PC-9 (cell line): ENCODE measurements at regions of chr1 and their contacts with region 1.

Region 1: GRCh38 chr1:151680812-151681211 is 35.8 kb downstream of the CELF3 start:
- DNase-seq: peak; percentile 36 to 92
- H3K4me3 ChIP-seq: peak overlapping the region; percentile 14; the same call in 1 of the 2 replicates
- H3K27ac ChIP-seq: peak overlapping the region; percentile 83
- H3K4me1 ChIP-seq: peaks cover 32% of the 10 kb centered on the region
- H3K27me3 ChIP-seq: no peaks in the 10 kb centered on the region
- CTCF ChIP-seq: no peak

Region 2: DNA sequence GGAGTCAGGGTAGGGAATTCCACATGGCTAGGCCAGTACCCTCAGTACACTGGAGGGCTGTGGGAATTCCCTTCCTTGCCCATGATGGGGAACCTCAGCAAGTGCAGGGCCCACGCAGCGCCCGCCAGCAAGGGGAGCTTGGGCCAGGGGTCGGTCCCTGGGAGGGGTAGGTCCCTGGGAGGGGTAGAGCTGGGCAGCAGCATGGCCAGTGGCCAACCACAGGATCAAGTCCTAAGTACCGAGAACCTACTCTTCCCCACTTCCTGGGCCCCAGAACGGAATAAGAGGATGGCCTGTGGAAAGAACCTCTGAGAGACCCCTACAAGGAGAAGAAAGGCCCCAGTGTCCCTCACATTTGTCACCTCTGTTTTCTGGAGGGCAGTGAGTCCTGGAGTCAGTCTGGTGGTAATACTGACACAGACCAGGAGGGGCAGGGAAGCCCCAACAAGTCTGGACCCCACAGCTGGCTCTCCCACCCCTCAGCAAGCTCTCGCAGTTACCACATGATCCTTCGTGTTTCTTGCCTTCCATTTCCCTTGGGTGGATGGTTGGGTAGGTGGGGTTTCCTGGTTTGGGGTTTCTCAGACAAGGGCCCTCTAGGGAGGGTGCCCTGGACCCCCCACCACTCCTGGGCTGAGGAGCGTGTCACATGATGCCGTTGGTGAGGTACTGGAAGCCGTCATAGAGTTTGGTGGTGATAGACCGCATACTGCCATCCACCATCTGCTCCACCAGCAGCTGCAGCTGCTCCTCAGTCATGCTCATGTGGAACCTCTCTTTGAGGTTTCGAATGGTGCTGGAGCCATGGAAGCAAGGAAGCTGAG is 388.4 kb before region 1 on chr1:
- CTCF ChIA-PET with region 1: no interaction called
- POLR2A ChIA-PET with region 1: interaction called, 31 read pairs
- intact Hi-C with region 1: no loop called
- DNase-seq: peak in 1 of 2 experiments; percentile 24
- H3K4me3 ChIP-seq: no peak overlapping the region
- H3K27ac ChIP-seq: no peak overlapping the region
- H3K4me1 ChIP-seq: no peaks in the 10 kb centered on the region
- H3K27me3 ChIP-seq: no peaks in the 10 kb centered on the region
- CTCF ChIP-seq: no peak

Region 3: DNA sequence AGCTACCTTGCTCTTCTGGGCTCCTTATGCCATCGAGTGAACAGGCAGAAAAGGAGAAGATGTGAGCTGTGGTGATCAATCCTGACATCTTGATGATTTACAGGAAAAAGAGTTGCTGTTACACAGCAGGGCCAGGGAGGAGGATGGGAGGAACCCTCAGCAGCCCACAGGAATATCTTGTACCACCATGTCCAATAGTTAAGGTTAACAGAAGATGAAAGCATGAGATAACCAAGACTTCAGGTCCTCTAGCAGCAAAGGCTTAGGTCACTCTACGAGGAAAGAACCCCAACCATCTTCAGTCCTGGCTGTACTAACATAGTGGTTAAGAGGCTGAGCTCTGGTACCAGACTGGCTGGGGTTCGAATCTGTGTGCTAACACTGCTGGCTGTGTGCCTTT is 296.2 kb before region 1 on chr1:
- CTCF ChIA-PET with region 1: no interaction called
- POLR2A ChIA-PET with region 1: no interaction called
- intact Hi-C with region 1: no loop called
- DNase-seq: no peak
- H3K4me3 ChIP-seq: no peak overlapping the region
- H3K27ac ChIP-seq: no peak overlapping the region
- H3K4me1 ChIP-seq: no peaks in the 10 kb centered on the region
- H3K27me3 ChIP-seq: no peaks in the 10 kb centered on the region
- CTCF ChIP-seq: no peak

Region 4: GRCh38 chr1:151539990-151540981 is 140.5 kb before region 1 on chr1 and contains the start of gene TUFT1:
- CTCF ChIA-PET with region 1: no interaction called
- POLR2A ChIA-PET with region 1: no interaction called
- intact Hi-C with region 1: loop called (anchors 5 kb)
- DNase-seq: peak; percentile 85 to 95
- H3K4me3 ChIP-seq: peak within 1 kb of the TSS; percentile 92
- H3K27ac ChIP-seq: peak within 1 kb of the TSS; percentile 95
- H3K4me1 ChIP-seq: peaks cover 60% of the 10 kb centered on the region
- H3K27me3 ChIP-seq: no peaks in the 10 kb centered on the region
- CTCF ChIP-seq: no peak
- total RNA-seq, gene TUFT1: 35.3 and 40.2 TPM in 2 replicates

Region 5: GRCh38 chr1:151606395-151606794 is 74.4 kb before region 1 on chr1:
- CTCF ChIA-PET with region 1: no interaction called
- POLR2A ChIA-PET with region 1: no interaction called
- intact Hi-C with region 1: loop called (anchors 5 kb)
- DNase-seq: peak; percentile 63 to 99
- H3K4me3 ChIP-seq: no peak overlapping the region
- H3K27ac ChIP-seq: peak overlapping the region; percentile 82
- H3K4me1 ChIP-seq: peaks cover 49% of the 10 kb centered on the region
- H3K27me3 ChIP-seq: no peaks in the 10 kb centered on the region
- CTCF ChIP-seq: no peak

Region 6: GRCh38 chr1:151611832-151612500 is 68.8 kb before region 1 on chr1 and contains the start of gene SNX27:
- CTCF ChIA-PET with region 1: no interaction called
- POLR2A ChIA-PET with region 1: interaction called, 14 read pairs
- intact Hi-C with region 1: loop called (anchors 5 kb)
- DNase-seq: peak; percentile 78 to 83
- H3K4me3 ChIP-seq: peak within 1 kb of the TSS; percentile 71
- H3K27ac ChIP-seq: peak within 1 kb of the TSS; percentile 88
- H3K4me1 ChIP-seq: peaks cover 74% of the 10 kb centered on the region
- H3K27me3 ChIP-seq: no peaks in the 10 kb centered on the region
- CTCF ChIP-seq: no peak
- total RNA-seq, gene SNX27: 24.6 and 40.1 TPM in 2 replicates

Region 7: DNA sequence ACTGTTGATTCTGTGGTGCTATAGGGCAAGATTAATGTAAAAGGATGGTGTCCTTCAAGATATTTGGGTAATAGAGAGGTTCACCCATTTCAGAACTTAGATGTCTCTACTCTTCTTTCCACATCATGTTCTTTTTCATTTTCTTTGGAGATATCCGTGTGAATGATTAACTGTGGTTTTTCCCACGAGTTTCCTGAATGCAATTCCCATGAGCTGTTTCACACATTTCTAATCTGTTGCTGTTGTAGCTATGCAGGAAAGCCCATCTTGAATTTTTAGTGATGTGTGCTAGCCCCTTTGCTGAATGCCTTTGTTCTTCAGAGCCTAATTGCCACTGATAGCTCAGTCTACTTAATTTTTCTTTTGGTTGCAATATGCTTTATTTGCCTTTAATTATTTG is 41.3 kb before region 1 on chr1:
- CTCF ChIA-PET with region 1: no interaction called
- POLR2A ChIA-PET with region 1: interaction called, 25 read pairs
- intact Hi-C with region 1: no loop called
- DNase-seq: no peak
- H3K4me3 ChIP-seq: no peak overlapping the region
- H3K27ac ChIP-seq: no peak overlapping the region
- H3K4me1 ChIP-seq: no peaks in the 10 kb centered on the region
- H3K27me3 ChIP-seq: no peaks in the 10 kb centered on the region
- CTCF ChIP-seq: no peak

Region 8: DNA sequence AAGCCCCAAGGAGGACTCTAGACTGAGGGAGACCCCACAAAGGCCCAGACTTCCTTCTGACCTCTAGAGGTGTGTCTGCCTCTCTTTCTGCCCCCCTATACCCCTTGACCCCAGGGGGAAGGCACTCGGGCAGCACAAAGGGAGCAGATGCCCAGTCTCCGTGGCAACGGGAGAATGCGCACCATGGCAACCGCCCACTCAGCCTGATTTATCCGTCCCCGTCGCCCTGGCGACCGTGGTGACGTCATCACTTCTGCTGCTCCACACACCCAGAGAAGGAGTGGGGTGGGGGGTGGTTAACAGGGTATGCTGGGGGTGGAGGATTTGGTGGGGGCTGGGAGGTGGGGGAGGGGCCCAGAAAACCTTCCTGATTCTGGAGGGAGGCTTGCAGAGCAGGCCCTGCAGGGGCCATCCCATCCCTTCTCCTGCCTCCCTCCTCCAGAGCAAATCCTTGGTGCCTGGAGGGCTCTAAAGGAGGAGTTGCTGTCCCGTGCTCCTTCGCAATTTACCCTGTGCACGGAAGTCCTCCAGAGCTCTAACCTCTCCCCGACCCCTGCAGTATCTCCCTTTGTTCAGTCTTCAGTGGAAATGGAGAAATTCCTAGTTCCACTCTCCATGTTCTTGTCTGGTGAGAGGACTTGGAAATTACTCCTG is 29.5 kb after region 1 on chr1:
- CTCF ChIA-PET with region 1: no interaction called
- POLR2A ChIA-PET with region 1: no interaction called
- intact Hi-C with region 1: no loop called
- DNase-seq: peak in 1 of 2 experiments; percentile 25
- H3K4me3 ChIP-seq: no peak overlapping the region
- H3K27ac ChIP-seq: no peak overlapping the region
- H3K4me1 ChIP-seq: no peaks in the 10 kb centered on the region
- H3K27me3 ChIP-seq: peaks cover 30% of the 10 kb centered on the region
- CTCF ChIP-seq: no peak

Region 9: DNA sequence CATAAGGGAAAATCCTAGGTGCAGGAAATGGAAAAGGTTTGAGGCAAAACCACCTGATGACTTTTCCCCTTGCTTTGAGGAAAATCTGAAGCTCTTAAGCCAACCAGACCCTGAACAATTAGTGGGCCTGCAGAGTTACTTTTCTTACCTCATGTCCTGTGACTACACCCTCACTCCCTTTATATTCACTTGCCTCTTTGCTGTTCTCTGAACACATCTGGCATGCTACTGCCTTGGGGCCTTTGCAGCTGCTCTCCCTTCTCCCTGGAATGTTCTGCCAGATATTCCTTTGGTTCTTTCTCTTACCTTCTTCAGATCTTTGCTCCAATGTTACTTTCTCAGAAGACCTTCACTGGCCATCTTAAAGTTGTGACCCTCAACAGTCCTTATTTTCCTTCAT is 456.4 kb after region 1 on chr1:
- CTCF ChIA-PET with region 1: no interaction called
- POLR2A ChIA-PET with region 1: no interaction called
- intact Hi-C with region 1: no loop called
- DNase-seq: no peak
- H3K4me3 ChIP-seq: no peak overlapping the region
- H3K27ac ChIP-seq: no peak overlapping the region
- H3K4me1 ChIP-seq: no peaks in the 10 kb centered on the region
- H3K27me3 ChIP-seq: peaks cover 3% of the 10 kb centered on the region; the same call in 1 of the 2 replicates
- CTCF ChIP-seq: no peak